HCT116 (cell line): ENCODE measurements at regions of chr7 and their contacts with region 1.

Region 1: DNA sequence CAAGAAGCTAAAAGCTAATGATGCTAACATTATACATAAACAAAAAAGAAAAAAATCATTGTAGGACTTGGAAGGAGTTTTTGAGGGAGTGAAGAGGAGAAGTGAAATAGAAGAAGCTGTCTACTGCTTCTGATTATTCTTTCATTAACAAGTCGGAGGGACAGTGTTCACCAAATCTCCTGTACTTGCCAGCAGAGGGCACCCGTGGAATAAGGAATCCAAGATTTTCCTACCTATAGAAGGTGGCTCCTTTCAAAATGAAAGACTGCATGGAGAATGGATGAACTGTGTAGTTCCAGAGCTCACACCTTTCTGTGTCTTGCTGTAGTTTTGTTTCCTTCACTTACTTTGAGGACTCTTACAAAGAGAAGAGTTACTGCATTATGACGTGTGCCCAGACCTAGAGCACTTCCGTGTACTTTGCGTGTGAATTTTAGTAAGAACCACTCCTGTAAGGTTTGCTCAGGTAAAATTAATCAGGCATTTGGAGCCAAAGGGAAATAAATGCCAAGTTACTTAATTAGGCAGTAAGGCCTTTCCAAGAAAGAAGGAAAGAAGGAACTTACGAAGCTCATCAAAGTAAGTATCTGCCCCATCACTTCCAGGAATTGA is 145.1 kb downstream of the SEMA3D start:
- DNase-seq: peak; percentile 62
- ATAC-seq: peak; percentile 89
- H3K4me3 ChIP-seq: no peak overlapping the region
- H3K27ac ChIP-seq: no peak overlapping the region
- H3K4me1 ChIP-seq: no peaks in the 10 kb centered on the region
- H3K27me3 ChIP-seq: no peaks in the 10 kb centered on the region
- CTCF ChIP-seq: peak; percentile 64 to 87 (median 77)
- POLR2A ChIP-seq: no peak
- RAD21 ChIP-seq: peak; percentile 88

Region 2: DNA sequence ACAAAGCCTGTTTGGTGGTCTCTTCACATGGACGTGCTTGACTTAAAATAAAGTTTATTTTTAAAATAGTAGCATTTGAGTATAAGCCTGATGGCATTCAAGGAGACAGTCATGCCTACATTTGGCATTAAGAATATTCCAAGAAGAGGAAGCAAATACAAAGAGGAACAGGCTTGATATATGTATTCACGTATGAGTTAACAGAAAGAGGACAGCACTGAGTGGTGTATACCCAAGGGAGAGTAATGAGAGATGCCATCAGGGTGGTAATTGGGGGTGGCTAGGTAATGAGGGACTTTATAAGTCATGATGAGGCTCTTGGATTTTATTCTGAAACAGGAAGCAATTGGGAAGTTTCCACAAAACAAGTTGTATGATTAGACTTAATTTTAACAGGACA is 218.2 kb before region 1 on chr7:
- CTCF ChIA-PET with region 1: no interaction called
- POLR2A ChIA-PET with region 1: no interaction called
- RAD21 ChIA-PET with region 1: no interaction called
- intact Hi-C with region 1: no loop called
- DNase-seq: no peak
- ATAC-seq: no peak
- H3K4me3 ChIP-seq: no peak overlapping the region
- H3K27ac ChIP-seq: no peak overlapping the region
- H3K4me1 ChIP-seq: no peaks in the 10 kb centered on the region
- H3K27me3 ChIP-seq: no peaks in the 10 kb centered on the region
- CTCF ChIP-seq: no peak
- POLR2A ChIP-seq: no peak
- RAD21 ChIP-seq: no peak

Region 3: DNA sequence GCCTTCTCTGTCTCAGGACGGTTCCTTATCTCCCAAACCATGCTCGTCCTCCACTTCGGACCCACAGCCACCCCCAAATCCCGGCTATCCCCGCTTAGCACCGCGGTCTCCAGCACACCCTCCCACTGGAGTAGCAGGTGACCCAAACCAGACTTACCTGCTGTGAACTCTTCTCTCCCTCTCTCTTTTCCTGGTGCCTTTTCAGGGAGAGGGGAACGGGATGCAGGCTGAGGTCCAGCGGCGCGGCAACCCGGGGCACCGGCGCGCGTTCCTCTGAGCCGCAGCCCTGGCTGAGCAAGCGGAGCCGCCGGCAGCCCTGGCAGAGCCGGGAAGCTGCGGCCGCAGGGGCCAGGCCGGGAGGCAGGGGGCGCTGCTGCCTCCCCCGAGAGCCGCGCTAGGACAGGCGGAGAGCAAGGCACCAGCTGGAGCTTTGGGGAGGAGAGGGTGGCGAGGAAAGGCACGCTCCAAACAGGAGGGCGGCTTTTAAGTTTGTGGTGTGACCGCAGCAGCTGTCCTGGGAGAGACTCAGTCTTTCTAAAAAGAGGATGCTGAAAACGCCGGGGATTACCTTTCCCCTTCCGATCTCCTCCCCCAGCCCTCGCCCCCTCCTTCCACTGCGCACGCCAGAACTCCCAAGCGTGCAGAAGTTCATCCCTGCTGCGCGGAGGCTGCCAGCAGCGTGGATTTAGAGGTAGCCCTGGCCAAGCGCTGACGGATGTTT is 145.0 kb after region 1 on chr7 and contains the start of gene SEMA3D:
- CTCF ChIA-PET with region 1: interaction called, 5 read pairs
- POLR2A ChIA-PET with region 1: no interaction called
- RAD21 ChIA-PET with region 1: no interaction called
- intact Hi-C with region 1: loop called (anchors 1 kb)
- DNase-seq: peak; percentile 48
- ATAC-seq: peak; percentile 97
- H3K4me3 ChIP-seq: peak within 1 kb of the TSS; percentile 62 to 66
- H3K27ac ChIP-seq: no peak within 1 kb of the TSS; the same call in 1 of the 2 replicates
- H3K4me1 ChIP-seq: peaks cover 5 to 8% of the 10 kb centered on the region in 2 experiments; a peak in 3 of 4 replicates
- H3K27me3 ChIP-seq: no peaks in the 10 kb centered on the region
- CTCF ChIP-seq: peak; percentile 44 to 93 (median 82); a peak in 5 of 6 replicates
- POLR2A ChIP-seq: no peak
- RAD21 ChIP-seq: peak; percentile 63
- total RNA-seq, gene SEMA3D: 1.4 TPM

Region 4: DNA sequence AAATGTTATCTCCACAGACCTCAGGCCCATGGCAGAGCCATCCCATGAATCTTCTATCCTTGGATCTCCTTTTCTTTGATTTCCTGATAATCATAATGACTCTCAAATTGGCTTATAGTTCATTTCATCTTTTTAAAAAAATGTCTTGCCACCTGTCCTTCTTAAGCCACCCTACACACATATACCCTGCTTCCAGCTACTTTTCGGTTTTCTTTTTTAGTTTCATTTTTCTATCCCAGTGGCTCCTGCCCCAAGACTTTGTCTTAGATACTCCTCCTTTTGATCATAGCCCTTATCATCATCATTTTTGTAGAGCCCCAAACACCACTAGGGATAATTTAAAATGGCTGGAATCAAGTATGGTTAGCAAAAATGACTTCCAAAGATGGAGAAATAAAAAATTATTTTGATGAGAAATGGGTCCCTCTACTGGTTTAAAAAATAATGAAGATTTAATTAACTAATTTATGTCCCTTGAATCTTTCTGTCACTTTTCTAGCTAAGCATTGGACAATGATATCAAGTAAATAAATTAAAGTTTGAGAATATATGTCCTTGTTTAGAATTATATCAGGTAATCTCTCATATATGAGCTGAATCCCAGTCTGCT is 422.4 kb after region 1 on chr7:
- CTCF ChIA-PET with region 1: interaction called, 15 read pairs
- POLR2A ChIA-PET with region 1: no interaction called
- RAD21 ChIA-PET with region 1: interaction called in 1 of 2 experiments, 3 read pairs
- intact Hi-C with region 1: loop called (anchors 2 kb)
- DNase-seq: no peak
- ATAC-seq: no peak
- H3K4me3 ChIP-seq: no peak overlapping the region
- H3K27ac ChIP-seq: no peak overlapping the region
- H3K4me1 ChIP-seq: no peaks in the 10 kb centered on the region
- H3K27me3 ChIP-seq: no peaks in the 10 kb centered on the region
- CTCF ChIP-seq: peak in 1 of 3 experiments; percentile 26; a peak in 2 of 6 replicates
- POLR2A ChIP-seq: no peak
- RAD21 ChIP-seq: no peak

Region 5: DNA sequence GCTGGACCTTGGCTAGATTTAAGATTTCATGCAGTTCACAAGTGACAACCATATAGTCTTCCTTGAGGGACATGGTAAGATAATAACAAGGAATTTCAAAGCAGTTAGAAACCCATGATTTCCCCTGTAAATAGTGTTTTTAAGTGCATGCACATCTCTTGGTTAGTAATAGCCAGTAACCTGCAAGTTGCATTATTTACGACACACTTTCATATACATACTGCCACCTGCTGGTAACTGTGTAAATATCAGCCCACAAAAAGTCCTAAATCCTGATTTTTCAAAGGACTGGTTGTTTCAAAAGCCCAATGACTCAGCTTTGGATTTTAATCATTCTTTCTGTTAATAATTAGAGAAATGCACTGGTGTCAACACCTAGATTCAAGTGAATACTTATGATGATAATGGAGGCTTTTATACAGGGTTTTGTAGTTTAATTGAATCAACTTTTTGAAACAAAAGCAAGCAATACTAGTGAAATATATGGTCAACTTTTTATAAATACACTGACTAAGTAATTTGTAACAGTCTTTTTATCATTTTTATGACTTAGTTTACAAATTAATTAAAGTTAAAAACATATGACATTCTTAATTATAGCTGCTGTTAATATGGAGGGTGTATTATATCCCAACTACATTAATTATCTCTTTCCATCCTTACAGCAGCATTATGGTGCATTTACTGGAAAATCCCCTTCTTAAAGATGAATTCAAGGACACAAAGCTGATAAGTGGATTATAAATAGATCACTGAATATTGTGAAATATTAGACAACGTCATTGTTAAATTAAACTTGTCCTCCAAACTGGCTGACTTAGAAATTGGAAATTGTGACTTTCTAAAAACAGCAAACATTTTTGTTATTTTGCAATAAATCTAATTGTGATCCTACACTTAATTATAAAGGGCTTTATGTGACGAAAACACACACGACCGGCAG is 512.8 kb after region 1 on chr7:
- CTCF ChIA-PET with region 1: interaction called, 6 read pairs
- POLR2A ChIA-PET with region 1: no interaction called
- RAD21 ChIA-PET with region 1: interaction called, 3 to 4 read pairs
- intact Hi-C with region 1: loop called (anchors 1 kb)
- DNase-seq: peak; percentile 37
- ATAC-seq: peak; percentile 54
- H3K4me3 ChIP-seq: no peak overlapping the region
- H3K27ac ChIP-seq: no peak overlapping the region
- H3K4me1 ChIP-seq: no peaks in the 10 kb centered on the region
- H3K27me3 ChIP-seq: no peaks in the 10 kb centered on the region
- CTCF ChIP-seq: peak; percentile 49 to 82 (median 59); a peak in 5 of 6 replicates
- POLR2A ChIP-seq: no peak
- RAD21 ChIP-seq: peak; percentile 63

Region 6: GRCh38 chr7:85750454-85750949 is 708.8 kb after region 1 on chr7:
- CTCF ChIA-PET with region 1: no interaction called
- POLR2A ChIA-PET with region 1: no interaction called
- RAD21 ChIA-PET with region 1: no interaction called
- intact Hi-C with region 1: loop called (anchors 1 kb)
- DNase-seq: peak; percentile 32
- ATAC-seq: peak; percentile 98
- H3K4me3 ChIP-seq: no peak overlapping the region
- H3K27ac ChIP-seq: no peak overlapping the region
- H3K4me1 ChIP-seq: 0 out of 4 replicates have a peak, but pooled peaks cover 0 to 4% of the 10 kb centered on the region in 2 experiments
- H3K27me3 ChIP-seq: no peaks in the 10 kb centered on the region
- CTCF ChIP-seq: peak; percentile 43 to 77 (median 76); a peak in 5 of 6 replicates
- POLR2A ChIP-seq: no peak
- RAD21 ChIP-seq: peak; percentile 69